ENCODE measurements at regions of chr6 and their contacts with region 1.

Region 1: GRCh38 chr6:138001750-138002349 is 105.4 kb downstream of the PERP start:
- DNase-seq: peak; percentile 48
- ATAC-seq: peak; percentile 52; the same call in 1 of the 2 replicates
- H3K4me3 ChIP-seq: no peak overlapping the region
- H3K27ac ChIP-seq: no peak overlapping the region
- H3K4me1 ChIP-seq: peaks cover 0 to 10% of the 10 kb centered on the region in 2 experiments; a peak in 3 of 4 replicates
- H3K27me3 ChIP-seq: no peaks in the 10 kb centered on the region
- CTCF ChIP-seq: peak; percentile 86 to 95 (median 92)
- POLR2A ChIP-seq: no peak
- RAD21 ChIP-seq: peak; percentile 95

Region 2: GRCh38 chr6:138088330-138088766 is 86.5 kb after region 1 on chr6:
- CTCF ChIA-PET with region 1: interaction called, 7 read pairs
- POLR2A ChIA-PET with region 1: no interaction called
- RAD21 ChIA-PET with region 1: no interaction called
- intact Hi-C with region 1: loop called (anchors 5 kb)
- DNase-seq: peak; percentile 83
- ATAC-seq: peak; percentile 62
- H3K4me3 ChIP-seq: peak overlapping the region in 1 of 2 experiments; percentile 34; a peak in 2 of 4 replicates
- H3K27ac ChIP-seq: peak overlapping the region; percentile 83
- H3K4me1 ChIP-seq: peaks cover 44 to 51% of the 10 kb centered on the region in 2 experiments
- H3K27me3 ChIP-seq: no peaks in the 10 kb centered on the region
- CTCF ChIP-seq: no peak
- POLR2A ChIP-seq: no peak
- RAD21 ChIP-seq: no peak

Region 3: GRCh38 chr6:138403801-138404661 is 402.2 kb after region 1 on chr6 and contains the start of gene HEBP2:
- CTCF ChIA-PET with region 1: no interaction called
- POLR2A ChIA-PET with region 1: no interaction called
- RAD21 ChIA-PET with region 1: no interaction called
- intact Hi-C with region 1: loop called (anchors 1 kb)
- DNase-seq: peak; percentile 89
- ATAC-seq: peak; percentile 93
- H3K4me3 ChIP-seq: peak within 1 kb of the TSS; percentile 77 to 84
- H3K27ac ChIP-seq: peak within 1 kb of the TSS; percentile 80
- H3K4me1 ChIP-seq: peaks cover 8 to 20% of the 10 kb centered on the region in 2 experiments; a peak in 3 of 4 replicates
- H3K27me3 ChIP-seq: no peaks in the 10 kb centered on the region
- CTCF ChIP-seq: peak; percentile 54 to 57 (median 54)
- POLR2A ChIP-seq: peak; percentile 39
- RAD21 ChIP-seq: peak; percentile 72
- total RNA-seq, gene HEBP2: 51.6 TPM